ENCODE measurements at regions of chr10 and their contacts with region 1.

Region 1: DNA sequence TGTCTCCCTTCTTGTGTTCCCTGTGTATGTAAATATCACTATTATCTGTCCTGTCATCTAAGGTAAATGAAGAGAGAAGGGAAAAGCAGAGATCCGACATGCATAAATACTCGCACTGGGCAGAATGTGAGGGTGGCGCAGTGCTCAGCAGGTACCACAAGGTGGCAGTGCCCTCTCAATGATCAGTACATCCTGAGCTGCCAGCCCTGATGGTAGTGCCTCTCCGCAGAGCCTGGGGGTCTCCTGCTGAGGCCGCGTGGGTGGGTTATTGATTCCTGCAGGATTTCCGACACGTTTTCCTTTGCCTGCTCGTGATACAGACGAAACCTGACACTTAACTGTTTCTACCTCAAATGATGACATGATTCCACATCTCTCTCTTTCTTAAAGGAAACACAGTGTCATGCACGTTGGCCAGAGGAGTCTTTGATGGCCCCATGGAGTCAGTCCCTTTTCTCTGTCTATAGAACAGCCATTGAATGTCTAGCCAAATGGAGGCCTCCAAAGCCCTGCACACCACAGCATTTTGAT is 19.8 kb downstream of the RGR start:
- DNase-seq: peak; percentile 61
- H3K4me3 Mint-ChIP-seq: no peak overlapping the region
- H3K27ac Mint-ChIP-seq: no peak overlapping the region
- H3K4me1 Mint-ChIP-seq: peaks cover 8% of the 10 kb centered on the region
- H3K27me3 Mint-ChIP-seq: peaks cover 28% of the 10 kb centered on the region
- CTCF ChIP-seq: peak; percentile 64

Region 2: GRCh38 chr10:84365335-84365881 is 100.7 kb after region 1 on chr10:
- CTCF ChIA-PET with region 1: no interaction called
- intact Hi-C with region 1: loop called (anchors 5 kb)
- DNase-seq: no peak
- H3K4me3 Mint-ChIP-seq: no peak overlapping the region
- H3K27ac Mint-ChIP-seq: no peak overlapping the region
- H3K4me1 Mint-ChIP-seq: no peaks in the 10 kb centered on the region
- H3K27me3 Mint-ChIP-seq: no peaks in the 10 kb centered on the region
- CTCF ChIP-seq: no peak

Region 3: DNA sequence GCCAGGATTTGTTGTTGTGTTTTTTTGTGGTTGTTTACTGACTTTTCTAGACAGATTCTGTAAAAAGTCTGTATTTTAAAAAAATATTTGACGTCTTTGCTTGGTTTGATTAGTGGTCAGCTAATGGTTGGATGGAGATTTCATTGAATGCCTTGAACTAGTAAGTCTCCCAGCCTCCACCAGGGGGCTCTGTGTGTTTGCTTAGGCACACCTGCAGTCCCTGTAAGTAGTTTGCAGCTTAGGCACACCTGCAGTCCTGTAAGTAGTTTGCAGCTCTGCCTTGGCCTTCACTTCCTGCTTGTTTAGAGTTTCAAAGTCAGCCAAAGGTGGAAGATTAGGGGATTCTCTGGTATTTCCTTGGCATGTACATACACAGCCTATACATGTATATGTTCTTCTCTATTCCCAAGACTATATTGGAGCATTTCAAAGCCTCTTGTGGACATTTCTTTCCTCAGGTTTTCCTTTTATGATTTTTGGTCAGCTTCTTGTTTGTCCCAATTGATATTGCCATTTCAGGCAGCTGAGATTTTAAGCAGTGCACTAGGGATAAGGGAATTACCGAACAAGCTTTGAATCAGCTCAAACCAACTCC is 165.3 kb after region 1 on chr10:
- CTCF ChIA-PET with region 1: interaction called, 4 read pairs
- intact Hi-C with region 1: loop called (anchors 10 kb)
- DNase-seq: peak; percentile 76
- H3K4me3 Mint-ChIP-seq: no peak overlapping the region
- H3K27ac Mint-ChIP-seq: no peak overlapping the region
- H3K4me1 Mint-ChIP-seq: peaks cover 22% of the 10 kb centered on the region
- H3K27me3 Mint-ChIP-seq: no peaks in the 10 kb centered on the region
- CTCF ChIP-seq: peak; percentile 57

Region 4: GRCh38 chr10:84537447-84537931 is 272.8 kb after region 1 on chr10:
- CTCF ChIA-PET with region 1: interaction called, 13 read pairs
- intact Hi-C with region 1: loop called (anchors 1 kb)
- DNase-seq: peak; percentile 37
- H3K4me3 Mint-ChIP-seq: no peak overlapping the region
- H3K27ac Mint-ChIP-seq: no peak overlapping the region
- H3K4me1 Mint-ChIP-seq: no peaks in the 10 kb centered on the region
- H3K27me3 Mint-ChIP-seq: no peaks in the 10 kb centered on the region
- CTCF ChIP-seq: peak; percentile 52